WTC11 (cell line): ENCODE measurements at regions of chr7 and their contacts with region 1.

Region 1: DNA sequence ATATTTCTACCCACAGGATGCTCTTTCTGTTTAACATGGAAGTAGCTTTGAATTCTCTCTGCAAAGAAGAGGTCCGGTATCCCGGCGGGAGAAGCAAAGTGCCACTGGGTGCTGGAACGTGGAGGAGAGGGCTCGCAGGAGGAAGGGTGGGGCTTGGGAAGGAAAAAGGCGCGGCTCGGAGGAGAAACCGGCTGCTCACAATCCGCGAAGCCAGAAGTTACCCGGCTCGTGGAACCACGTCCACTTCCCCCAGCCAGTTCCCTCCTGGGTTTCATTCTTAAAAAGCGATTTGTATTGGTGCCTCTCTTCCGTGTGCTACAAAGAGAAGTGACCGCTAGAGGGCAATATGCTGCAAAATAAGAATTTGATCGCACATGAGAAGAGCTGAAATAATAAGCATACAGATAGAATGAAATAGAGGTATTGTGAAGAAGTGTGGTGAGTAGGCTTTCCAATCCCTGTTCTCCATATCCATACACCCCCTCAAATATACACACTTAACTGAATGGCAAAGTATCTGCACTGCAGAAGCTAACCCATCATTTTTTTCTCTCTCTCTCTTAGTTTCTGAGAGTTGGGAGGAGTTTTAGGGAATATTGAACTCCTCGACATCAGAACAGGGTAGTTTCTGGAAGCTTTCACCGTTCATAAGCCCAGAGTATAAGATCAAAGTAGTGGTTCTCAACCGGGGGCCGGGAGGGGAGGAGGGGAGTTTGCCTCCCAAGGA is 31.1 kb downstream of the TRIL start:
- DNase-seq: peak; percentile 68
- ATAC-seq: peak; percentile 84
- H3K4me3 Mint-ChIP-seq: peak overlapping the region; percentile 74
- H3K27ac Mint-ChIP-seq: no peak overlapping the region
- H3K4me1 Mint-ChIP-seq: peaks cover 41% of the 10 kb centered on the region
- H3K27me3 Mint-ChIP-seq: peaks cover 8% of the 10 kb centered on the region
- CTCF ChIP-seq: peak; percentile 75

Region 2: GRCh38 chr7:28939844-28940544 is 13.0 kb after region 1 on chr7:
- CTCF ChIA-PET with region 1: interaction called, 67 read pairs
- POLR2A ChIA-PET with region 1: no interaction called
- DNase-seq: no peak
- ATAC-seq: peak; percentile 56
- H3K4me3 Mint-ChIP-seq: no peak overlapping the region
- H3K27ac Mint-ChIP-seq: no peak overlapping the region
- H3K4me1 Mint-ChIP-seq: peaks cover 24% of the 10 kb centered on the region
- H3K27me3 Mint-ChIP-seq: no peaks in the 10 kb centered on the region; the same call in 1 of the 2 replicates
- CTCF ChIP-seq: no peak

Region 3: GRCh38 chr7:29099891-29100847 is 173.1 kb after region 1 on chr7:
- CTCF ChIA-PET with region 1: interaction called, 246 read pairs
- POLR2A ChIA-PET with region 1: no interaction called
- DNase-seq: no peak
- ATAC-seq: no peak
- H3K4me3 Mint-ChIP-seq: no peak overlapping the region
- H3K27ac Mint-ChIP-seq: no peak overlapping the region
- H3K4me1 Mint-ChIP-seq: peaks cover 4% of the 10 kb centered on the region
- H3K27me3 Mint-ChIP-seq: no peaks in the 10 kb centered on the region; the same call in 1 of the 2 replicates
- CTCF ChIP-seq: no peak

Region 4: DNA sequence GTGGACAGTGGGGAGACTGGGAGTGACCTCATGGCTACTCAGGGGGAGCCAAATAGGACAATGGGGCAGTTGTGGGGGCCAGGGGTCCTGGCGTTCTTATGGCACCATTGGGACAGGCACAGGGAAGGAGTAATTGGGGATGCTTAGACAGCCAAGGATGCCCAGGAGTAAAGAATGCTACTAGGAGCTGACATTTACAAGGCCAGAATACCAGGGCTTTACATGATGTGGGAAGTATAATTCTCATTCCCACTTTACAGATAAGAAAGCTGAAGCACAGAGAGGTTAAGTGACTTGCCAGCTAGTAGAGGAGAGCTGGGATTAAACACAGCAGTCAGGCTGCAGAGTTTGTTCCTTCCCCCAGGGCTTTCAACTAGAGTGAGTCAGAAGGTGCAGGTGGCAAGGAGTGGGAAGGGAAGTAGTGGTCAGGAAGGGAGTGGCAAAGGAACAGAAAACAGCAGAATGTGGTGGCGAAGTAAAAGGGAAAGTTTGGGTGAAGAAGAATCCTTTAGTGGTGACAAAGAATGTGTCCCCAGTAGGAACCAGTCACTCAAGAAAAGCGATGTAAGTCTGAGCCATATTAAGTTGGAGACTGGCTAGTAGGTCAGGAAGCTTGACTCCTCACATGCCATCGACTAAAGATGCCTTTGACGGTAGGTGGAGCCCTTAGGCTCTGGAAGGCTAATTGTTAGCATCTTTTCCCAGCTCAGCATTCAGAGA is 186.5 kb after region 1 on chr7:
- CTCF ChIA-PET with region 1: interaction called, 26 read pairs
- POLR2A ChIA-PET with region 1: no interaction called
- DNase-seq: peak; percentile 28
- ATAC-seq: peak; percentile 92
- H3K4me3 Mint-ChIP-seq: no peak overlapping the region
- H3K27ac Mint-ChIP-seq: peak overlapping the region; percentile 66
- H3K4me1 Mint-ChIP-seq: peaks cover 33% of the 10 kb centered on the region
- H3K27me3 Mint-ChIP-seq: no peaks in the 10 kb centered on the region
- CTCF ChIP-seq: no peak

Region 5: GRCh38 chr7:29345600-29345999 is 418.6 kb after region 1 on chr7:
- CTCF ChIA-PET with region 1: interaction called, 14 read pairs
- POLR2A ChIA-PET with region 1: no interaction called
- DNase-seq: peak; percentile 66
- ATAC-seq: peak; percentile 90
- H3K4me3 Mint-ChIP-seq: no peak overlapping the region
- H3K27ac Mint-ChIP-seq: no peak overlapping the region
- H3K4me1 Mint-ChIP-seq: no peaks in the 10 kb centered on the region
- H3K27me3 Mint-ChIP-seq: peaks cover 4% of the 10 kb centered on the region; the same call in 1 of the 2 replicates
- CTCF ChIP-seq: 0 out of 2 replicates have a peak, but pooled peaks have one; percentile 18